ENCODE measurements at regions of chr5 and their contacts with region 1.

Region 1: GRCh38 chr5:139262742-139263445 is 30.6 kb upstream of the MATR3 start:
- DNase-seq: peak; percentile 87 to 93
- ATAC-seq: peak; percentile 99 to 100 (median 99)
- H3K4me3 ChIP-seq: no peak overlapping the region
- H3K27ac ChIP-seq: peak overlapping the region; percentile 5
- H3K4me1 ChIP-seq: peaks cover 12% of the 10 kb centered on the region
- H3K27me3 ChIP-seq: no peaks in the 10 kb centered on the region
- CTCF ChIP-seq: peak; percentile 90

Region 2: GRCh38 chr5:138354926-138355378 is 907.9 kb before region 1 on chr5:
- intact Hi-C with region 1: no loop called
- DNase-seq: no peak
- ATAC-seq: peak in 3 of 4 donors; percentile 17 to 36 (median 31)
- H3K4me3 ChIP-seq: peak overlapping the region; percentile 96
- H3K27ac ChIP-seq: peak overlapping the region; percentile 93
- H3K4me1 ChIP-seq: peaks cover 40% of the 10 kb centered on the region
- H3K27me3 ChIP-seq: no peaks in the 10 kb centered on the region
- CTCF ChIP-seq: no peak

Region 3: DNA sequence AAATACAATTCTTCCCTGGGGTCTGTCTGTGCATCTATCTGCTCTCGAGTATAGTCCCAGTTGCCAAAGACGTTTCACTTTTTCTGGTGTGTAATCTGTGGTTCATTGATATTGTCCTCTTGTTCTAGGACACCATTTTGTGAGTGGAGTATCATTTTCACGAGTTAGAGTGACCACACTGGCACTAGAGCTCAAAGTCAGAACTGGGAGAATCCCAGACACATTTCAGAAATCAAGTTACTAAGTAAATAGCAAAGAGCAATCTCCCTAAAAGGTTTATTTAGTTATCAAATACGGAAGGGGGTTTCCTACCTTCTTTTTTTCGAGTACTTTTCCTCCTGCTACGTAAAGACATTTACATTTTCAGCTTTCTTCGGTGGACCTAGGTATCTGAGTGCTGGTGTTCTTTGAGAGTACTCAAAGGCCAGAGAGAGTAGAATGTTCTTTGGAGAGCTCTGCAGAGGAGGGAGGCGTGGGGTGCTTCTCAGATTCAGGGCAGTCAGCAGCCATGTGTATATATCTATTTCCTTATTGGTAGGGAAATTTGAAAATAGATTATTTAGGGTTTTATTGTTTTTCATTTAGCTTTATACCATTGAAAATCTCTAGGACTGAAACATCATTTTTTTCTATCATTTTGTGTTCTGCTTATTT is 678.8 kb before region 1 on chr5:
- intact Hi-C with region 1: loop called (anchors 5 kb)
- DNase-seq: no peak
- ATAC-seq: no peak
- H3K4me3 ChIP-seq: no peak overlapping the region
- H3K27ac ChIP-seq: no peak overlapping the region
- H3K4me1 ChIP-seq: no peaks in the 10 kb centered on the region
- H3K27me3 ChIP-seq: no peaks in the 10 kb centered on the region
- CTCF ChIP-seq: no peak

Region 4: GRCh38 chr5:138641547-138642298 is 621.2 kb before region 1 on chr5:
- intact Hi-C with region 1: loop called in 1 of 2 experiments (anchors 2 kb)
- DNase-seq: peak; percentile 65 to 74
- ATAC-seq: peak; percentile 65 to 83 (median 76)
- H3K4me3 ChIP-seq: no peak overlapping the region
- H3K27ac ChIP-seq: no peak overlapping the region
- H3K4me1 ChIP-seq: no peaks in the 10 kb centered on the region
- H3K27me3 ChIP-seq: no peaks in the 10 kb centered on the region
- CTCF ChIP-seq: peak; percentile 64

Region 5: GRCh38 chr5:138824924-138825863 is 437.7 kb before region 1 on chr5:
- intact Hi-C with region 1: loop called in 1 of 2 experiments (anchors 10 kb)
- DNase-seq: no peak
- ATAC-seq: peak in 1 of 4 donors; percentile 57
- H3K4me3 ChIP-seq: no peak overlapping the region
- H3K27ac ChIP-seq: no peak overlapping the region
- H3K4me1 ChIP-seq: peaks cover 23% of the 10 kb centered on the region
- H3K27me3 ChIP-seq: no peaks in the 10 kb centered on the region
- CTCF ChIP-seq: peak; percentile 62

Region 6: GRCh38 chr5:138874771-138875551 is 387.9 kb before region 1 on chr5 and contains the start of gene LRRTM2:
- intact Hi-C with region 1: loop called in 1 of 2 experiments (anchors 10 kb)
- DNase-seq: no peak
- ATAC-seq: no peak
- H3K4me3 ChIP-seq: no peak within 1 kb of the TSS
- H3K27ac ChIP-seq: no peak within 1 kb of the TSS
- H3K4me1 ChIP-seq: peaks cover 38% of the 10 kb centered on the region
- H3K27me3 ChIP-seq: no peaks in the 10 kb centered on the region
- CTCF ChIP-seq: no peak
- total RNA-seq, gene LRRTM2: 0.19 to 0.28 (median 0.22) TPM in 3 of 4 donors, not detected in the other

Region 7: DNA sequence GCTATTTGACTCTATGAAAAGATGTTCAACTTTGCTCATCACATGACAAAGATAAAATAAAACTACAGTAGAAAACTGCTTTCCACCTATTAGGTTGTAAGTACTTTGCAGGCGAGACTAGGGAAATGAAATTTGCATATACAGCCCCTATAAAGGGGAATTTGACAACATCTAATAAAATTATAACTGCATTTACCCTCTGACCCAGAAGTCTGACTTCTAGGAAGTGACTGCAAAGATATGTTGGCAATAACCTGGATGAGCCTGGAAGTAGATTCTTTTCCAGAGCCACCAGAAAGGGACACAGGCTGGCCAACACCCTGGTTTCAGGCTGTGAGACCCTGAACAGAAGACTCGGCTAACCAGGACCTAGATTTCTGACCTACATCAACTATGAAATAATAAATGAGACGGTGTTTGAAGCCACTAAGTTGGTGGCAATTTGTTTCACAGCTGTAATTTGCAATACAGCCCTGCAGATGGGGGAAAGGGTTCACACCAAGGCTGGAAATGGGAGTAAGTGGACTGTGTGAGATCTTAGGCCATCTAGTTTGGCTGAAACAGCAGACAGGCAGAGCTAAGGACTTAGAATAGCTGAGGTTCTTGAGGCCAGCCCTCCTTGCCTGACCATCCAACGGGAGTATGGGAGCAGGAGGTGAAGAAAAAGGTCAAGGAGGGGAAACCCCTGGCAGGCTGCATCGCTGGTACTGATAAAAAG is 171.3 kb before region 1 on chr5:
- intact Hi-C with region 1: loop called (anchors 5 kb)
- DNase-seq: no peak
- ATAC-seq: peak; percentile 65 to 90 (median 84)
- H3K4me3 ChIP-seq: no peak overlapping the region
- H3K27ac ChIP-seq: no peak overlapping the region
- H3K4me1 ChIP-seq: peaks cover 22% of the 10 kb centered on the region
- H3K27me3 ChIP-seq: no peaks in the 10 kb centered on the region
- CTCF ChIP-seq: peak; percentile 37